ENCODE measurements at regions of chr1 and their contacts with region 1.

Region 1: GRCh38 chr1:160193091-160193819 is 2.9 kb downstream of the CASQ1 start:
- DNase-seq: peak; percentile 62 to 88 (median 78)
- ATAC-seq: peak; percentile 95
- H3K4me3 ChIP-seq: no peak overlapping the region
- H3K4me3 Mint-ChIP-seq: no peak overlapping the region
- H3K27ac ChIP-seq: no peak overlapping the region
- H3K27ac Mint-ChIP-seq: no peak overlapping the region
- H3K4me1 ChIP-seq: peaks cover 7% of the 10 kb centered on the region
- H3K4me1 Mint-ChIP-seq: no peaks in the 10 kb centered on the region
- H3K27me3 ChIP-seq: no peaks in the 10 kb centered on the region
- H3K27me3 Mint-ChIP-seq: no peaks in the 10 kb centered on the region
- CTCF ChIP-seq: peak; percentile 89

Region 2: DNA sequence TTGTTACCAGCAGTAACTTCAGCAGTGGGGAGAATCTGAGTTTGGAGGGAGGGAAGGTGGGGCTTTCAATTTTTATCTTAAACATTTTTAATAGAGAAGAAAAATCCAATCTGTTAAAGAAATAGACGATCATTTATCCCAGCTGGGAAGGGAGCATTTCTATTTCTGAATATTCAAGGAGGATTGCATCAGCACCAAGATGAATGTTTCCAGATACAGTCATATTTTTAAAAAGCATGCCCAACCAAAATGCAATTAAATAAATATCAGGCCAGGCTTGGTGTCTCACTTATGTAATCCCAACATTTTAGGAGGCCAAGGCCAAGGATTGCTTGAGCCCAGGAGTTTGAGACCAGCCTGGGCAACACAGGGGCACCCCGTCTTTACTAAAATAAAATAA is 43.5 kb before region 1 on chr1:
- CTCF ChIA-PET with region 1: no interaction called
- POLR2A ChIA-PET with region 1: no interaction called
- intact Hi-C with region 1: no loop called
- DNase-seq: no peak
- ATAC-seq: no peak
- H3K4me3 ChIP-seq: no peak overlapping the region
- H3K4me3 Mint-ChIP-seq: no peak overlapping the region
- H3K27ac ChIP-seq: no peak overlapping the region
- H3K27ac Mint-ChIP-seq: no peak overlapping the region
- H3K4me1 ChIP-seq: no peaks in the 10 kb centered on the region
- H3K4me1 Mint-ChIP-seq: no peaks in the 10 kb centered on the region
- H3K27me3 ChIP-seq: no peaks in the 10 kb centered on the region
- H3K27me3 Mint-ChIP-seq: no peaks in the 10 kb centered on the region
- CTCF ChIP-seq: no peak

Region 3: DNA sequence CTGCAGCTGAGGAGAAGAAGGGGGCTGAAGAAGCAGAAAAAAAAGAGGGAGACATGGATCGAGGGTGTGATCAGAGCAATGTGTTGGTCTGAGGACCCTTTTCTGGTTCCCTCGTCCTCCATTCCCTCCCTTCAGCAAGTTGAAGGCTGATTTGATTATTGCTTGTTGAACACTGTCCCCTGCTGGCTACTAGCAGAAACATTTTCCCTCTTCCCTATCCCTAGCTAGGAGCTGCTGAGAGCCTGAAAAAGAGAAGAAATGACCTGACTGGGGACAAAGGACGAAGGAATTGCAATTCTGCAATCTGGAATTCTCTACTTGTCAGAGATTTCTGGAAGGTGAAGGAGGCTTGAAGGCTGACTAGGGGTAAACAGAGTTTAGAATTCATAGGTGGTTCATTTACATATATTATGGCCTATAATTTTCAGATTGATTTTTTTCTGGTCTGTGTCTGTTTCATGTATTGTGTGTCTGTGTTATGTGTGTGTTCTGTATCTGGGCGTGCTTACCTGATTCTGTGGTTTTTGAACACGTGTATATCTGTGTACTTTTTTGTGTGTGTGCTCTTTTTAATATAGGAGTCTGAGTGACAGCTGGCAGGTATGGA is 183.4 kb after region 1 on chr1:
- CTCF ChIA-PET with region 1: interaction called, 7 read pairs
- POLR2A ChIA-PET with region 1: no interaction called
- intact Hi-C with region 1: loop called (anchors 1 to 2 kb)
- DNase-seq: peak in 4 of 14 experiments; percentile 37 to 74 (median 69)
- ATAC-seq: peak; percentile 80
- H3K4me3 ChIP-seq: no peak overlapping the region
- H3K4me3 Mint-ChIP-seq: no peak overlapping the region
- H3K27ac ChIP-seq: no peak overlapping the region
- H3K27ac Mint-ChIP-seq: no peak overlapping the region
- H3K4me1 ChIP-seq: peaks cover 12% of the 10 kb centered on the region
- H3K4me1 Mint-ChIP-seq: peaks cover 13% of the 10 kb centered on the region
- H3K27me3 ChIP-seq: no peaks in the 10 kb centered on the region
- H3K27me3 Mint-ChIP-seq: no peaks in the 10 kb centered on the region
- CTCF ChIP-seq: peak; percentile 87